Activated naive CD4-positive, alpha-beta T cell treated with anti-CD3 and anti-CD28 coated beads for 36 hours (primary cell): ENCODE measurements at regions of chr4 and their contacts with region 1.

Region 1: GRCh38 chr4:105061136-105061696 is 85.5 kb upstream of the TET2 start:
- DNase-seq: peak; percentile 69
- H3K4me3 Mint-ChIP-seq: peak overlapping the region; percentile 31
- H3K27ac Mint-ChIP-seq: peak overlapping the region; percentile 91
- H3K4me1 Mint-ChIP-seq: peaks cover 57% of the 10 kb centered on the region
- H3K27me3 Mint-ChIP-seq: no peaks in the 10 kb centered on the region

Region 2: DNA sequence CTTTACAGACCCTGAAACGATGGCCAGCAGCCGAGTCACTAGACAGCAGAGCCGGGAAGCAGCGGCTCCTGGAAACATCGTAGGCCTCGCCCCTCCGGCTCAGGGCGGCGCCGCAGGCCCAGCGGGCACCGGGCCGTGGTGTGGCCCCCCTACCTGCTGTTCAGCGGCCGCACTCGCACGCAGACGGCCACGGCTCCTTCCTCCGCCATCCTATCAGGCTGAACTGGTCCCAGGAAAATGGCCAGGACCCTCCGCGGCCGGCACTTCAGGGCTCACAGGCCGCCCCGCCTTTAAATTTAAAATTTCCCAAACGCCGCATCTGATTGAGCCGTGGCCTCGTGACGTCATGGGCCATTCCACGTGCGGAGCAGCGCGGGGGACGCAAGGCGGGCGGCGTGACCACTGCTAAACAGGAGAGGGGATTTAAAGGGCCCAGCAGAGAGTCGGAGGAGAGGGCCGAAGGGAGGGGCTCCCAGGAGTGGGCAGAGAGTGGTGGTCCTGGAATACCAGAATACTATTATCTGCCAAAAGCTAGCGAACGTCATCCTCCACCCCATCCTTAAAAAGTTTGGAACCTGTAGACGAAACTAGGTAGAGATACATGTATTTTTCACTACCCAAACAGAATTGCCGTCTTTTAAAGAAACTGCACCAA is 1863.0 kb before region 1 on chr4 and contains the start of gene CENPE:
- CTCF ChIA-PET with region 1: no interaction called
- intact Hi-C with region 1: loop called (anchors 2 kb)
- DNase-seq: peak; percentile 89
- H3K4me3 Mint-ChIP-seq: peak within 1 kb of the TSS; percentile 87
- H3K27ac Mint-ChIP-seq: peak within 1 kb of the TSS; percentile 89
- H3K4me1 Mint-ChIP-seq: peaks cover 7% of the 10 kb centered on the region
- H3K27me3 Mint-ChIP-seq: peaks cover 3% of the 10 kb centered on the region
- total RNA-seq, gene CENPE: 38.1 to 45.2 TPM

Region 3: DNA sequence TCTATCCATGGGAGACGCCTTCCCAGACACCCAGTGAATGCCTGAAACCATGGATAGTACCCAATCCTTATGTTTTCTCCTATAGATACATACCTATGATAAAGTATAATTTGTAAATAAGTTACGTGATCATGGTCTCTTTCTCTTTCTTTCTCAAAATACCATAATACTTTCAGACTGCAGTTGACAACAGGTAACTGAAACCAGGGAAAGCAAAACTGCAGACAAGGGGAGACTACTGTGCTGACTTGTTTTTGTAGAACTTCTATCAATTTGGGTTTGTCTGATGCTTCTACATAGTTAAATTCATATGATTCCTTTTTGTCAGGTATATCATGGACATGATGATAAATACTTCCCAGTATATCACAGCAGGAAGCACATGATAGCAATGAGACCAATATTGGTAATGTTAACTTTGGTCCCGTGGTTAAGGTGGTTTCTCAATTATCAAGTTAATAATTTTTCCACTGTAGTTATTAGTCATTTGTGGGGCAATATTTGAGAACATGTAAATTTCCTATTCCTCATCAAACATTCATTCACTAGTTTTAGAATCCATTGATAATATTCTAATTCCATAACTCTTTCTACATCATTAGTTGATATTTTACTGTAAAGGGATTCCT is 212.5 kb before region 1 on chr4:
- CTCF ChIA-PET with region 1: no interaction called
- intact Hi-C with region 1: no loop called
- DNase-seq: no peak
- H3K4me3 Mint-ChIP-seq: no peak overlapping the region
- H3K27ac Mint-ChIP-seq: no peak overlapping the region
- H3K4me1 Mint-ChIP-seq: no peaks in the 10 kb centered on the region
- H3K27me3 Mint-ChIP-seq: no peaks in the 10 kb centered on the region

Region 4: GRCh38 chr4:104966349-104967033 is 94.7 kb before region 1 on chr4:
- CTCF ChIA-PET with region 1: no interaction called
- intact Hi-C with region 1: loop called (anchors 1 kb)
- DNase-seq: peak; percentile 73
- H3K4me3 Mint-ChIP-seq: no peak overlapping the region
- H3K27ac Mint-ChIP-seq: peak overlapping the region; percentile 82
- H3K4me1 Mint-ChIP-seq: peaks cover 12% of the 10 kb centered on the region
- H3K27me3 Mint-ChIP-seq: peaks cover 12% of the 10 kb centered on the region

Region 5: GRCh38 chr4:105146276-105147015 is 85.2 kb after region 1 on chr4 and contains the start of gene TET2:
- CTCF ChIA-PET with region 1: no interaction called
- intact Hi-C with region 1: loop called (anchors 1 kb)
- DNase-seq: peak; percentile 86
- H3K4me3 Mint-ChIP-seq: peak within 1 kb of the TSS; percentile 96
- H3K27ac Mint-ChIP-seq: peak within 1 kb of the TSS; percentile 97
- H3K4me1 Mint-ChIP-seq: peaks cover 35% of the 10 kb centered on the region
- H3K27me3 Mint-ChIP-seq: no peaks in the 10 kb centered on the region
- total RNA-seq, gene TET2: 36.0 to 36.1 TPM

Region 6: DNA sequence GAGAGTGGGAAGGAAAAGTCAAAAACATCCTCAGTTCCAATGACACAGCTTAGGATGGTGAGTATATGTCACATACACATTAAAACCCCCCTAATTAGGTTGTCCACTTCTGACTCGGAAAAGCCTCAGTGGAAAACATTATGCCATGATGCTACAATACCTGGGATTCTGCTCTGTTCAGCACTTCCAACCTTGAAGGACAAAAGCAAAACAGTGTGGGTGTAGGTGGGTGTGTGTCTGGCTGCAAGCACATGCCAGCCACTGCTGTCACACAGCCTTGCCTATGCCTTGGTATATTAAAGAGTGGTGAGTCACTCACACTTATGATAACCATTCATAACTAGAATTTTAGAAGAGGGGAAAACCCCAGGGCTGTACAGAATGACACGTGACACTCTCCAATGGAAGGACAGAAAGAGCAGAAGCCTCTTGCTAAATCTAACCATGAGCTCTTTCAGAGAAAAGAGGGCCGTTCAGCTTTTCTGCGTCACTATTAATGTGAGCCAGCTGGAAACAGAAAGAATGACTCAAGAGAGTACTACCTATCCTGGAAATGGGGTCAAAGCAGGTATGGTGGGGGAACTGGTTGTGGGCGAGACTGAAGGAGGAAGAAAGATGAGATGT is 245.1 kb after region 1 on chr4:
- CTCF ChIA-PET with region 1: interaction called, 3 read pairs
- intact Hi-C with region 1: loop called (anchors 1 kb)
- DNase-seq: peak; percentile 84
- H3K4me3 Mint-ChIP-seq: no peak overlapping the region
- H3K27ac Mint-ChIP-seq: peak overlapping the region; percentile 87
- H3K4me1 Mint-ChIP-seq: peaks cover 24% of the 10 kb centered on the region
- H3K27me3 Mint-ChIP-seq: no peaks in the 10 kb centered on the region

Region 7: GRCh38 chr4:105708530-105709391 is 647.5 kb after region 1 on chr4 and contains the starts of genes GSTCD and INTS12:
- CTCF ChIA-PET with region 1: no interaction called
- intact Hi-C with region 1: loop called (anchors 1 kb)
- DNase-seq: peak; percentile 93
- H3K4me3 Mint-ChIP-seq: peak within 1 kb of the TSS; percentile 98
- H3K27ac Mint-ChIP-seq: peak within 1 kb of the TSS; percentile 91
- H3K4me1 Mint-ChIP-seq: peaks cover 26% of the 10 kb centered on the region
- H3K27me3 Mint-ChIP-seq: no peaks in the 10 kb centered on the region
- total RNA-seq, gene GSTCD: 15.8 to 18.2 TPM
- total RNA-seq, gene INTS12: 24.5 to 24.8 TPM